GM10248 (cell line): ENCODE measurements at regions of chr9 and their contacts with region 1.

Region 1: DNA sequence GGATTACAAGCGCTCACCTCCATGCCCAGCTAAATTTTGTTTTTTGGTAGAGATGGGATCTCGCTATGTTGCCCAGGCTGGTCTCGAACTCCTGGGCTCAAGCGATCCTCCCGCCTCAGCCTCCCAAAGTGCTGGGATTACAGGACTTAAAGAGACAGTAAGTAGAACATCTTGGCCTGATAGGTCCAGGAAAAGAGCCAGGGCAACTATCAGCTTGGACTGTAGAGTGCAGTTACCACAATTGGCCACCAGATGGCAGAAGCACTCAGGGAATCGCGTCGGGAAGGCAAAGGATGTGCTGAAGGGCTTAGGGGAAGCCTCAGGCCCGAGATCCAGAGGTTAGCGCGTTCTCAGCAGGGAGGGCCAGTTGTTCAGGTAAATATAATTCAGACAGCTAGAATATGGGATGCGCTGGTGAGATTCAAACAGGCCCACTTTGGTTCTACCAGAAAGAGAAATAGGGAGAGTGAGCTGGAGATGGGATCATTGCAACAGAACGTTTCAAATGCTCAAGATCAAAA is 21.5 kb downstream of the C9orf57 start:
- DNase-seq: peak; percentile 79
- CTCF ChIP-seq: peak; percentile 95

Region 2: GRCh38 chr9:71741711-71742648 is 297.0 kb before region 1 on chr9:
- CTCF ChIA-PET with region 1: no interaction called
- POLR2A ChIA-PET with region 1: no interaction called
- DNase-seq: no peak
- CTCF ChIP-seq: no peak

Region 3: GRCh38 chr9:71806901-71807307 is 232.0 kb before region 1 on chr9:
- CTCF ChIA-PET with region 1: interaction called, 12 read pairs
- POLR2A ChIA-PET with region 1: no interaction called
- DNase-seq: peak; percentile 62
- CTCF ChIP-seq: peak; percentile 84

Region 4: GRCh38 chr9:71819115-71819739 is 219.7 kb before region 1 on chr9:
- CTCF ChIA-PET with region 1: interaction called, 10 read pairs
- POLR2A ChIA-PET with region 1: no interaction called
- DNase-seq: no peak
- CTCF ChIP-seq: peak; percentile 74

Region 5: GRCh38 chr9:71955300-71955915 is 83.5 kb before region 1 on chr9:
- CTCF ChIA-PET with region 1: no interaction called
- POLR2A ChIA-PET with region 1: no interaction called
- DNase-seq: no peak
- CTCF ChIP-seq: no peak

Region 6: GRCh38 chr9:72065076-72065475 is 26.1 kb after region 1 on chr9:
- CTCF ChIA-PET with region 1: interaction called, 20 read pairs
- POLR2A ChIA-PET with region 1: no interaction called
- DNase-seq: no peak
- CTCF ChIP-seq: no peak

Region 7: DNA sequence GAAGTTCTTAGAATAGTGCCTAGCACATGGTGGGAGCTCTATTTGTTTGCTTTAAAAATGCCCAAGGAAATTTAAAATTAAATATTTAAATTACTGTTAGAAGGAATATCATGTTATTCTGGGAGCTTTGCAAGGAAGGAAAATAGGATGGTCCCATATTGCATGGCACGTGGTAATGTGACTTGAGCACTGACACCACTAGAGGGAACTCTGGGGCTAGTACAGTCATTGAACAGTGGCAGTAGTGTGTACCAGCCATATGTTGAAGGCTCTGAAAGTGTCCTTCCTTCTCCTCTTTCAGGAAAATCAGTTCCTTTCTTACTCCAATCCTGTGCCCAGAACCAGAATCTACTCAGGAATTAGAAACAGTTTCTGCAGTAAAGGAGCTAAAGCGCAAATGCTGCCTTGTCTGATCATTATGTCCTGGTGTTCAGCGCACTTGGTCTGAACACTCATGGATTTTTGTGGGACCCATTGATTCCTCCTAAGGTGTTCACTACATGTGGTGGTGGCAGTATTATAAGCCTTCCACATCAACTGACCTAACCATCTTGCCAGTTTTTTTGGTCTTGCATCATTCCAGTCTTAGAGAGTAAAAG is 164.4 kb after region 1 on chr9:
- CTCF ChIA-PET with region 1: interaction called, 14 read pairs
- POLR2A ChIA-PET with region 1: no interaction called
- DNase-seq: peak; percentile 35
- CTCF ChIP-seq: peak; percentile 59

Region 8: GRCh38 chr9:72271613-72272478 is 232.9 kb after region 1 on chr9:
- CTCF ChIA-PET with region 1: interaction called, 193 read pairs
- POLR2A ChIA-PET with region 1: interaction called, 3 read pairs
- DNase-seq: peak; percentile 71
- CTCF ChIP-seq: peak; percentile 84

Region 9: GRCh38 chr9:72827950-72828731 is 789.2 kb after region 1 on chr9:
- CTCF ChIA-PET with region 1: interaction called, 16 read pairs
- POLR2A ChIA-PET with region 1: no interaction called
- DNase-seq: no peak
- CTCF ChIP-seq: no peak